ENCODE measurements at regions of chr1 and their contacts with region 1.

Region 1: DNA sequence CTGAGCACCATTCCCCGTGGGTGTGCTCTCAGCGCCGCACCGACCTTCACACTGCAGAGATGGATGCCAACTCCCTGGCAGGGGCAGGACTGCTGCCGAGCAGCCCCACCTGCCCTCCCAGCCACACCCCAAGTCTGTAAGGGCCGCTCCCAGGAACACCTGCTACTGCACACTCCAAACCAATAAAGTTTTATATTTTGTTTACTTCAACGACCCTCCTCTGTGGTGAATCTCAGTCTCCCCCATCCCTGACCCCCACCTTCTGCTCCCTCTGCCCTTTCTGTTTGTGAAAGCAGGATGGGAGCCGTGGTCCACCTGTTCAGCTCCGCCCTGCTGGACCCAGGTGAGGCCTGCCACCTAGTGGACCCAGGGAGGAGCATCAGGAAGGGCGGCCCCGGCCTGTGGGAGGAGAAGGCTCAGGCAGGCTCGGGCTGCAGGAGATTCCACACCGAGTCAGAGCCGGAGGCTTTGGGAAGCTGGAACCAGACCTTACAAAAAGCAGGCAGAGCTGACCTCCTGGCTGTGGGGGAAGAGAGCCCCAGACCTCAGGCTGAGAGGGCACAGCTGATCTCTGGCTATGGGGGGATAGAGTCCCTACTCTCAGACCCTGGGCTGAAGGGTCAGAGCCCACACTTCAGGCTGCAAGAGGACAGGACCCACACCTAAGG is 982 bp upstream of the TMEM82 start:
- DNase-seq: peak; percentile 91 to 92
- ATAC-seq: peak; percentile 76

Region 2: GRCh38 chr1:15598436-15598835 is 142.9 kb before region 1 on chr1:
- intact Hi-C with region 1: loop called in 1 of 2 experiments (anchors 5 kb)
- DNase-seq: no peak
- ATAC-seq: no peak